ENCODE measurements at regions of chr11 and their contacts with region 1.

Region 1: DNA sequence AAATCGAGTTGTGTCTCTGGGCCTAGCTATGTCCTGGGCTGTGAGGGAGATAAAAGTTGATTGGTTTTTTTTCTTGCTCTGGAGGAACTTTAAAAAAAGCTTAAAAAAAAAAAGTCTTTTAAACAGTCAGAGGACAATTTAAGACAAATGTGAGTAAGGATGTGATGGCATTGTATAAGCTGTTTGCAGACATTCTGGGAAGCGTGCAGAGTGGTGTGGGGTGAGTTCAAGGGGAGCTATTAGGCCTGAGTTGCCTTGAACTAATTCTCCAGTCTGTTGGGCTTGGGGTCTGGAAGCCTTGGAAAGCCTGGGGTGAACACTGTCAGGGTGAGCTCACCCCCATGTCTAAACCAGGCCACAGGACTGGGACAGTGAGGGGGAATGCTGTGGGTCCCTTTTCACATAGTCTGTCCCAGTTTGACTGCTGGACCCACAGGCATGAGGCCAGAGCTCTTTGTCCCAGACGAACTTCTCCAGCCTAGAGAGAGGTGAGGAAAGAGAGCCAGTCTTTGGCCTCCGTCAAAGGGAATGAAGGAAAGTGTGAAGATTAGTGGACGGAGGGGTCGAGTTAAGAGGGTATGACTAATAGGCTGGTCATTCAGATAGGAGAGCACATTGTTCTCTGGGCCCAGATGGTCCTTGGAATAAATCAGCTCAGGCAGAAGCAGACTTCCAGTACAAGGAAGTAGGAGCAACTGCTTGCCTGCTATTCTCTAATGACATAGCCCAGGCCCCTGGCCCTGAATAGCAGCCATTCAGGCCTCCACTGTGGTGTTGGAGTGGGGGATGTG is 76.4 kb upstream of the NNMT start:
- DNase-seq: peak; percentile 62 to 80 (median 68)
- ATAC-seq: no peak
- H3K4me3 ChIP-seq: no peak overlapping the region
- H3K27ac ChIP-seq: peak overlapping the region; percentile 42
- H3K4me1 ChIP-seq: peaks cover 34 to 62% of the 10 kb centered on the region in 2 experiments
- H3K27me3 ChIP-seq: no peaks in the 10 kb centered on the region
- CTCF ChIP-seq: no peak
- EP300 ChIP-seq: peak; percentile 57; the same call in 1 of the 2 replicates
- POLR2A ChIP-seq: no peak
- RAD21 ChIP-seq: no peak

Region 2: GRCh38 chr11:113664069-113664980 is 555.4 kb before region 1 on chr11:
- CTCF ChIA-PET with region 1: no interaction called
- POLR2A ChIA-PET with region 1: no interaction called
- in situ Hi-C with region 1: no loop called
- intact Hi-C with region 1: loop called (anchors 5 kb)
- DNase-seq: peak; percentile 49 to 70 (median 56)
- ATAC-seq: peak; percentile 86
- H3K4me3 ChIP-seq: peak overlapping the region; percentile 28
- H3K27ac ChIP-seq: peak overlapping the region; percentile 97
- H3K4me1 ChIP-seq: peaks cover 9 to 44% of the 10 kb centered on the region in 2 experiments; a peak in 4 of 5 replicates
- H3K27me3 ChIP-seq: no peaks in the 10 kb centered on the region
- CTCF ChIP-seq: no peak
- EP300 ChIP-seq: peak; percentile 81
- POLR2A ChIP-seq: no peak
- RAD21 ChIP-seq: no peak

Region 3: GRCh38 chr11:114166897-114167323 is 52.8 kb before region 1 on chr11:
- CTCF ChIA-PET with region 1: no interaction called
- POLR2A ChIA-PET with region 1: no interaction called
- in situ Hi-C with region 1: no loop called
- intact Hi-C with region 1: no loop called
- DNase-seq: no peak
- ATAC-seq: no peak
- H3K4me3 ChIP-seq: no peak overlapping the region
- H3K27ac ChIP-seq: no peak overlapping the region
- H3K4me1 ChIP-seq: peaks cover 0 to 8% of the 10 kb centered on the region in 2 experiments; a peak in 2 of 5 replicates
- H3K27me3 ChIP-seq: peaks cover 4 to 37% of the 10 kb centered on the region in 2 experiments; a peak in 4 of 5 replicates
- CTCF ChIP-seq: no peak
- EP300 ChIP-seq: no peak
- POLR2A ChIP-seq: no peak
- RAD21 ChIP-seq: no peak

Region 4: DNA sequence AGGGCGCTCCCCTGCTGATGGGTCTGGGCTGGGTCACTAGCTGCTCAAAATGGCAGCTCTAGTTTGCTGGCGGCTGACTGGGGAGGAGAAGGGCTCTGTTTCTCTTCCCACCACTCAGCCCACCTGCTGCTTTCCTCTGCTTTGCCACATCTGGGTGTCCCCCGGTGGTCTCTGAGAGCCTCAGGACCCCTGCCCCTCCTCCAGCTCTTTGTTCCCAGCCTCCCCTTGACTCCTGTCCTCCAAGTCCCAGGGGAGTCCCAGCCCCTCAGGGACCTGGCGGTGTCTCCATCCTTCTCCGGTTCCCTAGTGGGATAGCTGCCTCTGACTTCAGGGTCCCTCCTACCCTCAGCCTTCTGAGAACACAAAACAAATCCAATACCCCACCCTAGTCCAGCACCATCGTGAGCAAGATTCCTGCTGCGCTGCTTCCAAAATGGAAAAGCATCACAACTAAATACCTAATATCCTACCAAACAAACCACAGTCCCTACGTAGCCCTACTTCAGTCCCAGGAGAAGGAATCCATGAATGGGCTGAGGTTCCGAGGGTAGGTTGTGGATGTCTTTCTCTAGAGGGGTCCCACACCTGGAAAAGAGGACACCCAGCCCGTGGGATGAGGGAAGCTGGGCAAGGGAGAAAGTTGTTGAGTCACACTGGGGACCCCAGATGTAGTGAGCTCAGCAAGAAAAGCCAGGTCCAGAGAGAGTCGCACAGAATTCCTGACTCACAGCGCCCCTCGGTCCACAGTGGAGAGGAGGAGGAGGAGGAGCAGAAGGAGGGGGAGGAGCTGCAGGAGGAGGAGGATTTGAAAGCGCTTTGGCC is 31.4 kb after region 1 on chr11:
- CTCF ChIA-PET with region 1: no interaction called
- POLR2A ChIA-PET with region 1: interaction called, 3 read pairs
- in situ Hi-C with region 1: no loop called
- intact Hi-C with region 1: loop called (anchors 5 kb)
- DNase-seq: peak; percentile 63 to 70 (median 67)
- ATAC-seq: peak; percentile 84
- H3K4me3 ChIP-seq: no peak overlapping the region
- H3K27ac ChIP-seq: peak overlapping the region; percentile 25; the same call in 1 of the 3 replicates
- H3K4me1 ChIP-seq: peaks cover 9 to 11% of the 10 kb centered on the region in 2 experiments; a peak in 4 of 5 replicates
- H3K27me3 ChIP-seq: no peaks in the 10 kb centered on the region
- CTCF ChIP-seq: peak in 1 of 3 experiments; percentile 17; a peak in 1 of 6 replicates
- EP300 ChIP-seq: no peak
- POLR2A ChIP-seq: no peak
- RAD21 ChIP-seq: no peak